ENCODE measurements at regions of chr1 and their contacts with region 1.

Region 1: DNA sequence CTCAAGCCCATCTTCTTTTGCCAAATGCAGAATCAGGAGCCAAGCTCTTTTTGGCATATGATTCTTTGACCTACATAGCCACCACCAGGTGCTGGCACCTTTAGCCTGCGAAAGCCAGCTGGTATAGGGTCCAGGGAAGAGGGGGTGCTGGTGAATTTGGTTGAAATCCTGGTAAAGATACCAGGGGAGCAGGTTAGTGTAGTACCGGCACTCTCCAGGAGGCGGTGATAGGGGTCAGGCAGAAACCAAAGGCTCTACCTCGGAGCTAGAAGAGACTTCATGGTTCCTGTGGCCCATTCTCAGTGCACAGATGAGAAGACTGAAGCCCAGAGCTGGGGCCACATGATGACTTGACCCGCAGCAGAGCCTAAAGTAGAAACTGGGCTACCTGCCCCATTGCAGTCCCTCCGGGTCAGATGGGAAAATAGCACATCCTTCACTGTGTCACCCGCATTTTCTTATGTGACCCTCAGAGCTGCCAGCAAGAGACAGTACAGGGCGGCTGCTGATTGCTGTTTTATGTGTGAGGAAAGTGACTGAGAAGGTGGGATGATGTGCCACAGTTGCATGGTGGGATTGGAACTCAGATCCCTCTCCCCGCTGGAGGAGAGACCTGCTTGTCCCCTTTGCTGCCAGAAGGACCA is 36.0 kb upstream of the IL19 start:
- DNase-seq: peak; percentile 87
- H3K4me3 Mint-ChIP-seq: no peak overlapping the region
- H3K27ac Mint-ChIP-seq: peak overlapping the region; percentile 14
- H3K4me1 Mint-ChIP-seq: peaks cover 61% of the 10 kb centered on the region
- H3K27me3 Mint-ChIP-seq: peaks cover 8% of the 10 kb centered on the region

Region 2: GRCh38 chr1:206143537-206144172 is 591.0 kb before region 1 on chr1:
- CTCF ChIA-PET with region 1: no interaction called
- DNase-seq: no peak
- H3K4me3 Mint-ChIP-seq: no peak overlapping the region
- H3K27ac Mint-ChIP-seq: no peak overlapping the region
- H3K4me1 Mint-ChIP-seq: no peaks in the 10 kb centered on the region
- H3K27me3 Mint-ChIP-seq: peaks cover 58% of the 10 kb centered on the region

Region 3: GRCh38 chr1:206635080-206635977 is 99.3 kb before region 1 on chr1 and contains the start of gene DYRK3:
- CTCF ChIA-PET with region 1: no interaction called
- DNase-seq: peak; percentile 96
- H3K4me3 Mint-ChIP-seq: peak within 1 kb of the TSS; percentile 77
- H3K27ac Mint-ChIP-seq: peak within 1 kb of the TSS; percentile 85
- H3K4me1 Mint-ChIP-seq: peaks cover 26% of the 10 kb centered on the region
- H3K27me3 Mint-ChIP-seq: peaks cover 38% of the 10 kb centered on the region

Region 4: DNA sequence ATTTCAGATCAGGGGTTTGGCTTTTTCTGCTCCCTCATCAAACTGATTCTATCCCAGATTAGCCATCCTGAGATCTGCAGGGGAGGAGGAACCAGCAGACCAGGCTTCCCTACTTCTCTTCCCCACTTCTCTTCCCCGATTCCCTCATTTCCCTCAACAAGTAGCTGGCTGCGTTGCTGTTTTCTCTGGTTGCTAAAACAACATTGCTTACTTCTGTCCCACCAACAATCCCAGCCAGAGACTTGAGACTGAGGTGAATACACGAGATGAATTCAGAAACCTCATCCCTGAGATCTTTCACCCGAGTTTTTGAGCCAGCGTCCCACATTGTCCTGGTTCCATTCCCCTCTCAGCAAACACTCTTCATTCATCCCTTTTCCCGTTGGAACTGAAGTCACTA is 76.9 kb before region 1 on chr1:
- CTCF ChIA-PET with region 1: no interaction called
- DNase-seq: no peak
- H3K4me3 Mint-ChIP-seq: no peak overlapping the region
- H3K27ac Mint-ChIP-seq: no peak overlapping the region
- H3K4me1 Mint-ChIP-seq: peaks cover 10% of the 10 kb centered on the region
- H3K27me3 Mint-ChIP-seq: peaks cover 61% of the 10 kb centered on the region

Region 5: GRCh38 chr1:206761159-206761768 is 26.6 kb after region 1 on chr1:
- CTCF ChIA-PET with region 1: interaction called, 20 read pairs
- DNase-seq: no peak
- H3K4me3 Mint-ChIP-seq: no peak overlapping the region
- H3K27ac Mint-ChIP-seq: peak overlapping the region; percentile 46
- H3K4me1 Mint-ChIP-seq: peaks cover 22% of the 10 kb centered on the region
- H3K27me3 Mint-ChIP-seq: peaks cover 43% of the 10 kb centered on the region

Region 6: GRCh38 chr1:206766251-206766856 is 31.7 kb after region 1 on chr1:
- CTCF ChIA-PET with region 1: interaction called, 20 read pairs
- DNase-seq: peak; percentile 79
- H3K4me3 Mint-ChIP-seq: peak overlapping the region; percentile 6
- H3K27ac Mint-ChIP-seq: peak overlapping the region; percentile 29
- H3K4me1 Mint-ChIP-seq: peaks cover 59% of the 10 kb centered on the region
- H3K27me3 Mint-ChIP-seq: peaks cover 66% of the 10 kb centered on the region

Region 7: GRCh38 chr1:206776229-206776628 is 41.6 kb after region 1 on chr1:
- CTCF ChIA-PET with region 1: interaction called, 19 read pairs
- DNase-seq: no peak
- H3K4me3 Mint-ChIP-seq: no peak overlapping the region
- H3K27ac Mint-ChIP-seq: no peak overlapping the region
- H3K4me1 Mint-ChIP-seq: peaks cover 26% of the 10 kb centered on the region
- H3K27me3 Mint-ChIP-seq: peaks cover 54% of the 10 kb centered on the region

Region 8: GRCh38 chr1:206784471-206784903 is 49.9 kb after region 1 on chr1:
- CTCF ChIA-PET with region 1: interaction called, 12 read pairs
- DNase-seq: peak; percentile 93
- H3K4me3 Mint-ChIP-seq: peak overlapping the region; percentile 51
- H3K27ac Mint-ChIP-seq: peak overlapping the region; percentile 84
- H3K4me1 Mint-ChIP-seq: peaks cover 62% of the 10 kb centered on the region
- H3K27me3 Mint-ChIP-seq: peaks cover 45% of the 10 kb centered on the region

Region 9: DNA sequence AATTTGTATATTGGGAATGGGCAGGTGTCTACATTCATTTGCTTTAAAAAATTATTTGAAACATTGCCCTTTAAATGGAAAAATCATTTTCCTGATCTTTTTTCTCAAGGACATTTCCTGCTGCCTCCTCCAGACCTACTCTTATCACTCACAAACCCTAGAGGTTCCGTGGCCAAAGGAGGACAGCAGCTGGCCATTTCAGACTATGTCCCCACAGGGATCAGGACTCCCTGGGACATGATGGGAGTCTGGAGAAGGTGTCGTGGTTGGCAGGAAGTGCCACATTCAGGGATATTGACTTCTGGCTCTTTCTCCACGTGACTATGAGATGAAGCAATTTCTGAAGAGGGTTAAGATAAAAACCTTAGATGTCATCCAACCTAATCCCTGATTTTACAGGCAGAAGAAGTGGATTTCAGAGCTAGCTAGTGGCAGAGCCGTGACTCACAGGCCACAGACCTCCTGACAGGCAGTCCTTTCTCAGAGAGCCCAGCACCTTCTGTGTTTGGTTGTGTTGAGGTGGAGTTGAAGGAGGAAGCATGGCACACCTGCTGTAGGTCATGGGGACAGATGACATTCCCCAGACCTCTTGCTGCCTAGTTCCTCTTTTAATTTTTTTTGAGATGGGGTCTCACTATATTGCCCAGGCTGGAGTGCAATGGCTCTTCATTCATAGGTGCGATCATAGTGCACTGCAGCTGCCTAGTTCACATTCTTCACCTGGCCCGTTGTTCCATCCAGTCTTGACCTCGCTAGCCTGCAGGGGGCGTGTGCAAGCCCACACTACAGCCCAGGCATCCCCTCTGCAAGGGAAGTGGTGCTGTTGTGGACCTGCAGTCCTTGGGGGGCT is 63.1 kb after region 1 on chr1:
- CTCF ChIA-PET with region 1: interaction called, 361 read pairs
- DNase-seq: peak; percentile 40
- H3K4me3 Mint-ChIP-seq: no peak overlapping the region
- H3K27ac Mint-ChIP-seq: no peak overlapping the region
- H3K4me1 Mint-ChIP-seq: peaks cover 32% of the 10 kb centered on the region
- H3K27me3 Mint-ChIP-seq: peaks cover 94% of the 10 kb centered on the region

Region 10: DNA sequence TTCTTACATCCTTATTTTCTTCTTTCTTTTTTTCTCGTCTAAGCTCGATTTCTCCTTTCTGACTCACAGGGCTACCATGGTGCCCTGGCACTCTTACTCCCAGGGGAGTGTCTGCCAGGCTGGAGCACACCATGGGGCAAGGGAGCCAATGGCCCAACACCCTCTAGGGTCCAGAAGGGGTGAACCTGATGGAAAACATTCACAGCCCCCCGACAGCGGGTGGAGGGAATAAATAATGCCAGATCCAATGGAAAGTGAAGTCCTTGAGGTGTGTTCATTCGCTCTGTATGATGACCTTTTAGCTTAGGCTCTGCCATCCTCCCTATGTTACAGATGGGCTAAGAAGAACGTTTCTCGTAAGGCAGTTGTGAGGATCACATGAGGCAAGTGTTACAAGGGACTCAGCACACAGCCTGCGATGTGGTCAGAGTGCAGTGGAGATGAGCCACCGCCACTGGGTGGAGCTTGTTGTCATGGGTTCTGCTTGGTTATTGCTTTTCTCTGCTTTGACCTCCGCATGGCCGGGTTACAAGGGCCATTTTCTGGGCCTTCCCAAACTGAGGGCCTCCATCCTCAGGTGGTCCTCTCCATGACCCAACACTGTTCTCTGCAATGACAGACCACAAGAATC is 190.6 kb after region 1 on chr1:
- CTCF ChIA-PET with region 1: no interaction called
- DNase-seq: peak; percentile 67
- H3K4me3 Mint-ChIP-seq: no peak overlapping the region
- H3K27ac Mint-ChIP-seq: no peak overlapping the region
- H3K4me1 Mint-ChIP-seq: peaks cover 28% of the 10 kb centered on the region
- H3K27me3 Mint-ChIP-seq: no peaks in the 10 kb centered on the region